ENCODE measurements at regions of chr2 and their contacts with region 1.

Region 1: DNA sequence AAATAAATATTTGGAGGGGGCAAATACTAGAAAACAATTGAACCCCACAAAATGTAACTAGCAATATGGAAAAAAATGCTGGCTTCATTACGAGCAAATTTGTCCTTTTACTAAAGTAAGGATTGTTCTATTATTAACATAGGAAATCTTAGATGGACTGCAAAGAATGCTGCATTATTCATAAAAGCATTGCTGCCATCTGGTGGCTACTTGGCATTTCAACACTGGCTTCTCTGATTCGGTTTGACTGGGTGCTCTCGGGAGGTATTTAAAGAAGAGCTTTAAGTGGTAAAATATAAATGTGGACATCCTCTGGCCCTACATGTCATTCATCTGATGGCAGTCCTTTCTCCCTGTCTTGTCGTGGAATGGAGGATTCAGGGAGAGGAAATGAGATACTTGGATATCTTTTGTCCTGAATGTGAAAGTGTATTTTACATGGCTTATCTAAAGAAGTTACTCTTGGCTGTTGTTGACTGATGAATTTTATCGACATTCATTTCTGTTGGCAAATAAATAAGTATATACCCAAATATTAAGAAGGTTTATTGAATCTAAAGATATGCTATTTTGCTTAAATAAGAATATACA is 130.2 kb downstream of the ARHGAP15 start:
- DNase-seq: peak; percentile 78
- ATAC-seq: no peak
- H3K4me3 ChIP-seq: no peak overlapping the region
- H3K4me3 Mint-ChIP-seq: peak overlapping the region; percentile 2
- H3K27ac ChIP-seq: peak overlapping the region in 1 of 2 donors; percentile 79
- H3K27ac Mint-ChIP-seq: peak overlapping the region; percentile 10
- H3K4me1 ChIP-seq: peaks cover 51 to 55% of the 10 kb centered on the region in 2 donors
- H3K4me1 Mint-ChIP-seq: peaks cover 66% of the 10 kb centered on the region
- H3K27me3 ChIP-seq: no peaks in the 10 kb centered on the region
- H3K27me3 Mint-ChIP-seq: no peaks in the 10 kb centered on the region
- CTCF ChIP-seq: peak; percentile 92

Region 2: DNA sequence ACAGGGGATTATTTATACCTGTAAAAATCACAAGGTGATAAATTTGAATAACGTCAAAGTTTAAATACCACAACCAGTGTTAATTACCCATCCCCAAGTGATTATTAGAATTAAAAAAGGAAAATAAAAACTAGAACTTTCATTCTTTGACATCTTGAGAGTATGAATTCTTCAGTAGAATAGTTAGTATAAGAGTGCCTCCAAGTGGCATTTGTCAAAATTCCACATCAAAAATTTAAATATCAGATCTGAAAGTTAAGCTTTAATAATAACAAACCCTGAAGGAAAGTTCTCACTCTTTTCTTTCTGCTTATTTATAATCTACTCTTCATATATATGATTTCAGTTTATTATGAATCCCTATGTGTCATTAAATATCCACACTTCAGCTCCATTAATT is 655.7 kb before region 1 on chr2:
- CTCF ChIA-PET with region 1: no interaction called
- POLR2A ChIA-PET with region 1: no interaction called
- intact Hi-C with region 1: no loop called
- DNase-seq: no peak
- ATAC-seq: no peak
- H3K4me3 ChIP-seq: no peak overlapping the region
- H3K4me3 Mint-ChIP-seq: no peak overlapping the region
- H3K27ac ChIP-seq: no peak overlapping the region
- H3K27ac Mint-ChIP-seq: no peak overlapping the region
- H3K4me1 ChIP-seq: no peaks in the 10 kb centered on the region
- H3K4me1 Mint-ChIP-seq: no peaks in the 10 kb centered on the region
- H3K27me3 ChIP-seq: no peaks in the 10 kb centered on the region
- H3K27me3 Mint-ChIP-seq: peaks cover 10% of the 10 kb centered on the region
- CTCF ChIP-seq: no peak

Region 3: DNA sequence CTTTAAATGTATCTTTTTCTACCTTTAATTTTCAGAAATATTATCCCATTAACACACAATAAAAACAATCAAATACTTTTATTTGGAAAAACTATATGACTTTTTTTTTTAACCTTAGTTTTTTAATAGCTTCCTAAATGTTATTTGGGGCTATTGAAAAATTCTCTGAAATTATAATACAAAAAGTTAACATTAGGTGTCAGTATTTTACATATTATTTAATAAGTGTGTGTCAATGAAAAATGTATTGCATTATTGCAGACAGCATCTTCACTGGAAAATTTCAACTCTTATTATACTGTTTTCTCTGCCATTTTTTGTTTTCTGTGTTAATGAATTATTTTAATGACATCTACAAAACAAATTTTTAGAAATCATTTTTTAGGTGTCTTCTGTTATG is 181.4 kb before region 1 on chr2:
- CTCF ChIA-PET with region 1: interaction called, 4 read pairs
- POLR2A ChIA-PET with region 1: no interaction called
- intact Hi-C with region 1: loop called (anchors 1 kb)
- DNase-seq: no peak
- ATAC-seq: no peak
- H3K4me3 ChIP-seq: no peak overlapping the region
- H3K4me3 Mint-ChIP-seq: no peak overlapping the region
- H3K27ac ChIP-seq: no peak overlapping the region
- H3K27ac Mint-ChIP-seq: no peak overlapping the region
- H3K4me1 ChIP-seq: no peaks in the 10 kb centered on the region
- H3K4me1 Mint-ChIP-seq: no peaks in the 10 kb centered on the region
- H3K27me3 ChIP-seq: no peaks in the 10 kb centered on the region
- H3K27me3 Mint-ChIP-seq: no peaks in the 10 kb centered on the region
- CTCF ChIP-seq: peak; percentile 24

Region 4: DNA sequence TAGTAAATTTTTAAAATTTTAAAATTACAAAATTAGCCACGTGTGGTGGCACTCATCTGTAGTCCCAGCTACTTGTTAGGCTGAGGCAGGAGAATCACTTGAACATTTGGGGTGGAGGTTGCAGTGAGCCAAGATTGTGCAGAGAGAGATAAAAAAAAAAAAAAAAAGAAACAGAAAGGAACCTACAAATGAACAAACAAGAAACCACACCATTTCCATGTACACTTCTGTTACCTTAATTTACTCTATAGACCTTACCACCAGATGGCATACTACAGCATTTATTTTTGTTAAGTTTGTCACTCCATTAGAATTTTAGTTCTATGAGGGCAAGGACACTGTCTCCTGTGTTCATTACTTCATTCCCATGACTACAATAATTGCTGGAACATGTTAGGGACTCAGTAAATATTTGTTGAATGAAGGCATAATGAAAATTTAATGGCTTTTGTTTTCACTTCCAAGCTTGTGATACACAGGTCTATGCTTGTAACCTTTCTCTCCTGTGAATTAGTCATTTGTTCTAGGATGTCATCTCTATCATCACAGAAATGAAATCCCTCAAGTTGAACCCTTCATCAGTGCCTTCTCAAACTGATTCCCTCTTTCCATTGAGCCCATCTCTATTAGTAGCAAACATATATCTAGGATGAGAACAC is 54.2 kb before region 1 on chr2:
- CTCF ChIA-PET with region 1: interaction called, 53 read pairs
- POLR2A ChIA-PET with region 1: no interaction called
- intact Hi-C with region 1: loop called (anchors 1 kb)
- DNase-seq: peak; percentile 55
- ATAC-seq: peak; percentile 39
- H3K4me3 ChIP-seq: no peak overlapping the region
- H3K4me3 Mint-ChIP-seq: no peak overlapping the region
- H3K27ac ChIP-seq: peak overlapping the region in 1 of 2 donors; percentile 50
- H3K27ac Mint-ChIP-seq: peak overlapping the region; percentile 16
- H3K4me1 ChIP-seq: peaks cover 10 to 17% of the 10 kb centered on the region in 2 donors
- H3K4me1 Mint-ChIP-seq: peaks cover 29% of the 10 kb centered on the region
- H3K27me3 ChIP-seq: no peaks in the 10 kb centered on the region
- H3K27me3 Mint-ChIP-seq: no peaks in the 10 kb centered on the region
- CTCF ChIP-seq: peak; percentile 56

Region 5: DNA sequence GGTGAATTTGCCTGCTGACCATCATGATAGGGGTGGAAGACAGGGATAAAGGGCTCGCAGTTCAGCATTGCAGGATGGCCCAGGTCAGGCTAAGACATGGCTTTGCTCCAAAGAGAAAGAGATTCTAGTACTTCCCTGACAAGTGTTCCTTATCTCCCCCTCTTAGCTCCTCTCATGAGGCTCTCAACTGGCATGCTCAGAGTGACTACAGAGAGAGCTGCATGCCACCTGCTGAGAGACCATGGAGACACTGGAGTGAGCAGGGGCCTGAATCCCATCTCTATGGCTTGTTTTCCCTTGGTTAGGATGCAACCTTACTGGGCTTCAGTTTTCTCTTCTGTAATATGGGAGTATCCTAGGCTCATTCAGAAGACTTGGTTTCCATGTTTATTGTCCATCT is 35.9 kb before region 1 on chr2:
- CTCF ChIA-PET with region 1: interaction called, 33 read pairs
- POLR2A ChIA-PET with region 1: no interaction called
- intact Hi-C with region 1: loop called (anchors 2 kb)
- DNase-seq: no peak
- ATAC-seq: no peak
- H3K4me3 ChIP-seq: no peak overlapping the region
- H3K4me3 Mint-ChIP-seq: no peak overlapping the region
- H3K27ac ChIP-seq: no peak overlapping the region
- H3K27ac Mint-ChIP-seq: no peak overlapping the region
- H3K4me1 ChIP-seq: no peaks in the 10 kb centered on the region
- H3K4me1 Mint-ChIP-seq: peaks cover 15% of the 10 kb centered on the region
- H3K27me3 ChIP-seq: no peaks in the 10 kb centered on the region
- H3K27me3 Mint-ChIP-seq: no peaks in the 10 kb centered on the region
- CTCF ChIP-seq: no peak

Region 6: GRCh38 chr2:143241403-143242088 is 17.9 kb before region 1 on chr2:
- CTCF ChIA-PET with region 1: interaction called, 28 read pairs
- POLR2A ChIA-PET with region 1: no interaction called
- intact Hi-C with region 1: loop called (anchors 2 kb)
- DNase-seq: no peak
- ATAC-seq: no peak
- H3K4me3 ChIP-seq: no peak overlapping the region
- H3K4me3 Mint-ChIP-seq: no peak overlapping the region
- H3K27ac ChIP-seq: no peak overlapping the region
- H3K27ac Mint-ChIP-seq: no peak overlapping the region
- H3K4me1 ChIP-seq: peaks cover 4 to 17% of the 10 kb centered on the region in 2 donors
- H3K4me1 Mint-ChIP-seq: peaks cover 8% of the 10 kb centered on the region
- H3K27me3 ChIP-seq: no peaks in the 10 kb centered on the region
- H3K27me3 Mint-ChIP-seq: no peaks in the 10 kb centered on the region
- CTCF ChIP-seq: no peak

Region 7: GRCh38 chr2:143284087-143284675 is 24.7 kb after region 1 on chr2:
- CTCF ChIA-PET with region 1: interaction called, 18 read pairs
- POLR2A ChIA-PET with region 1: no interaction called
- intact Hi-C with region 1: loop called (anchors 2 kb)
- DNase-seq: peak; percentile 62
- ATAC-seq: peak; percentile 80
- H3K4me3 ChIP-seq: no peak overlapping the region
- H3K4me3 Mint-ChIP-seq: no peak overlapping the region
- H3K27ac ChIP-seq: no peak overlapping the region
- H3K27ac Mint-ChIP-seq: no peak overlapping the region
- H3K4me1 ChIP-seq: no peaks in the 10 kb centered on the region
- H3K4me1 Mint-ChIP-seq: peaks cover 16% of the 10 kb centered on the region
- H3K27me3 ChIP-seq: no peaks in the 10 kb centered on the region
- H3K27me3 Mint-ChIP-seq: no peaks in the 10 kb centered on the region
- CTCF ChIP-seq: peak; percentile 93

Measured in B cell (primary cell).